ENCODE measurements at regions of chr3 and their contacts with region 1.

Region 1: GRCh38 chr3:128725932-128726690 is at the start of gene RAB7A:
- DNase-seq: peak; percentile 98
- ATAC-seq: peak; percentile 92
- H3K4me3 ChIP-seq: peak within 1 kb of the TSS; percentile 66
- H3K27ac ChIP-seq: peak within 1 kb of the TSS; percentile 76
- H3K4me1 ChIP-seq: peaks cover 11% of the 10 kb centered on the region
- H3K27me3 ChIP-seq: peaks cover 5% of the 10 kb centered on the region; the same call in 1 of the 2 replicates
- CTCF ChIP-seq: no peak
- POLR2A ChIP-seq: peak; percentile 98
- RAD21 ChIP-seq: no peak
- total RNA-seq, gene RAB7A: 57.0 and 65.3 TPM in 2 replicates

Region 2: GRCh38 chr3:128709508-128710210 is 16.5 kb before region 1 on chr3:
- CTCF ChIA-PET with region 1: no interaction called
- POLR2A ChIA-PET with region 1: no interaction called
- dilution Hi-C with region 1: no loop called
- in situ Hi-C with region 1: no loop called
- intact Hi-C with region 1: no loop called
- DNase-seq: no peak
- ATAC-seq: no peak
- H3K4me3 ChIP-seq: no peak overlapping the region
- H3K27ac ChIP-seq: no peak overlapping the region
- H3K4me1 ChIP-seq: no peaks in the 10 kb centered on the region
- H3K27me3 ChIP-seq: peaks cover 16% of the 10 kb centered on the region
- CTCF ChIP-seq: no peak
- POLR2A ChIP-seq: no peak
- RAD21 ChIP-seq: no peak

Region 3: DNA sequence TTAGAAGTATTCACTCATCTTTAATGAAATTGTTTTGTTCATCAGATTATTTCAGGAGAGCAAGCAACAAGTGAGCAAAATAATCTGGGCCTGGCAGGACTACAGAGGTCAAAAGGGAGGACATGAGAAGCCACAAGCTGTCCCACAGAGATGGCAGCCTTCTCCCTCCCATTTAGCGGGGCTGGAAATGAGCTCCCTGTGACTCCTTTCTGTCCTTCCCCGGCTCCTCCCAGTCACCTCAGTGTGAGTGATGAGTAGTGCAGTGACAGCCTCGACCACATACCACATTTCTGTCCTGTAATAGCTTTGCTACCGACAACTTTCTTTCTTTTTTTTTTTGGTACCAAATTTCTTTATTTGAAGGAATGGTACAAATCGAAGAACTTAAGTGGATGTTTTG is 37.9 kb after region 1 on chr3:
- CTCF ChIA-PET with region 1: no interaction called
- POLR2A ChIA-PET with region 1: no interaction called
- dilution Hi-C with region 1: no loop called
- in situ Hi-C with region 1: no loop called
- intact Hi-C with region 1: no loop called
- DNase-seq: no peak
- ATAC-seq: no peak
- H3K4me3 ChIP-seq: no peak overlapping the region
- H3K27ac ChIP-seq: no peak overlapping the region
- H3K4me1 ChIP-seq: peaks cover 15% of the 10 kb centered on the region
- H3K27me3 ChIP-seq: no peaks in the 10 kb centered on the region
- CTCF ChIP-seq: no peak
- POLR2A ChIP-seq: no peak
- RAD21 ChIP-seq: no peak

Region 4: DNA sequence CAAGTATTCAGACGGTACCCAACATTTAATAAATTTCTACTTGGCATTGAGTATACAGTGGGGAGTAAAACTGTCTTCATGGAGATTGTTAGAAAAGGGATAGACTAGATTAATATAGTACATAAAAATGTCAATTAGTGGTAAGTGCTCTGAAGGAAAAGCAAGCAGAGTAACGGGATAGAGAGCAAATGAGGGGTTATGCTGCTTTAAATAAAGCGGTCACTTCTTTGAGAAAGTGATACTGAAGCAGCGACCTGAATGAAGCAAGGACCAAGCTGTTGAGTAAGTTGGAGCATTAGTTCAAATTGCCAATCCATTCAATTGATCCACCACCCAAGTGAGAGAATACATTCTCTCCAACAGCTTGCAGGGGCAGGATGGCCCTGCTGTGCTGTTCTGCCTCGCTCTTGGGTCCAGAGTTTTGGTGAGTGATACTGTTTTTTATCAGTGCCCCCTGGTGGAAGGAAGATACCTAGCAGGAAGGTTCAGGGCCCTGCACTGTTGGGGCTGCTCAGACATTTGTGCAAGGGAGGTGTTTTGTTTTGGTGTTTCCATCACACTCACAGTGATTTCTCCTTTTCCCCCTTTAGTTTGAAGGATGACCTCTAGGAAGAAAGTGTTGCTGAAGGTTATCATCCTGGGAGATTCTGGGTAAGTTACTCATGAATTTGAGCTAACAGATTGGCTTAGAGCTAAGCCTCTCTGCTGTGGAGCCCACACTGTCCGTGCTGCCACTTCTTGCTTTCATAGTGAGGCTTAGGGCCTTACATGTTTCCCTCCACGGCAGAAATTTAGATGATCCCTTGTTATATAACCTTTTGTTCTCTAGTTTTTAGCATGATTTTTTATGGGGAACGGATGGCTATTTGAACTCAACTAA is 68.9 kb after region 1 on chr3:
- CTCF ChIA-PET with region 1: interaction called, 5 read pairs
- POLR2A ChIA-PET with region 1: no interaction called
- dilution Hi-C with region 1: no loop called
- in situ Hi-C with region 1: no loop called
- intact Hi-C with region 1: loop called (anchors 1 kb)
- DNase-seq: peak; percentile 61
- ATAC-seq: peak; percentile 96
- H3K4me3 ChIP-seq: no peak overlapping the region; the same call in 1 of the 2 replicates
- H3K27ac ChIP-seq: no peak overlapping the region
- H3K4me1 ChIP-seq: peaks cover 6% of the 10 kb centered on the region
- H3K27me3 ChIP-seq: no peaks in the 10 kb centered on the region
- CTCF ChIP-seq: peak; percentile 70
- POLR2A ChIP-seq: no peak
- RAD21 ChIP-seq: peak; percentile 64